ENCODE measurements at regions of chr10 and their contacts with region 1.

Region 1: GRCh38 chr10:96229568-96230030 is 41.8 kb downstream of the BLNK start:
- DNase-seq: peak; percentile 88
- ATAC-seq: peak; percentile 71
- H3K4me3 Mint-ChIP-seq: no peak overlapping the region
- H3K27ac Mint-ChIP-seq: no peak overlapping the region
- H3K4me1 Mint-ChIP-seq: peaks cover 12% of the 10 kb centered on the region
- H3K27me3 Mint-ChIP-seq: no peaks in the 10 kb centered on the region; the same call in 1 of the 2 replicates
- CTCF ChIP-seq: peak; percentile 77; the same call in 1 of the 2 replicates

Region 2: DNA sequence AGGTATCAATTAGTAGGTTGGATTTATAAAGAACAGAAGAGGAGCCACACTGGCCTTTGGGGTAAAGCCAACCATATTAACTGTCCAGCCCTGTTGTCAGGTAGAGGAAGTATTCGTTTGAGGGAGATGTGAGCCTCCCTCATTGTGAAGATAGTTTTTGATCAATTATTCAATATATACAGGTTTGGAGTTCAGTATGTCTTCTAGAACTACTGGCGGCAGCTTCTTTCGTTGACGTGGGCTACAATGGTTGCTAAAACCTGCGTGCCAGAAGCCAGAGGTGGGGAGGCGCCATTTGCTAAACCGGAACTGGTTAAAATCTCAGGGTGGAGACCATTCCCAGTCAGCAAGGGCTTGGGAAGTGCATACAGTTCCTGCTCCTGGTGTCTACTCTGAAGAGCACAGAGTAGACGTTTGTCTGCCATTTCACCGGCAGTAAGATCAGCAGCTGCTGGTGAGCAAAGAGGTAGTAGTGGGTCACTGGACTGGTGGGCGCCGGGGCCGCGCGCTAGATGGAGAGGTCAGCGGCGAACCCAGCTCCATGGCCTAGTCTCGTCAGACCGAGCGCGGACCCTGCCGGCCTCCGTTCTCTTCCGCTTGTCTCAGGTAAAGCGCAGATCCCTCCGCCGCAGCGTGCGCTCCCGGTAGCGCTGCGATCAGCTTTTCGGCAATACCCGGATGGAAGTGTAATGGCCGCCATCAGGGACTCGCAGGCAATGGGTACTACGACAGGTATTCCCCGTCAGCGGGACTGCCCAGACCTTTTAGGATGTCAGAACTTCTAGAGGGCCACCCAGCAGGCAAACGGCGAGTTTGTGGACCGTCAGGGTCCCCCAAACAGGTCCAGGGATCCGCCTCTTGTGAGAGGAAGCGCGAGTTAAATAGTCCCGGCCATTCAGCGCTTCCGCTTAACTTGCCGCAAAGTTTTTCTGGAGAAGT is 99.9 kb before region 1 on chr10 and contains the start of gene ZNF518A:
- CTCF ChIA-PET with region 1: interaction called, 14 read pairs
- POLR2A ChIA-PET with region 1: no interaction called
- DNase-seq: peak; percentile 91
- ATAC-seq: peak; percentile 88
- H3K4me3 Mint-ChIP-seq: peak within 1 kb of the TSS; percentile 87
- H3K27ac Mint-ChIP-seq: peak within 1 kb of the TSS; percentile 97
- H3K4me1 Mint-ChIP-seq: peaks cover 28% of the 10 kb centered on the region
- H3K27me3 Mint-ChIP-seq: peaks cover 3% of the 10 kb centered on the region; the same call in 1 of the 2 replicates
- CTCF ChIP-seq: no peak
- total RNA-seq, gene ZNF518A: 29.9 to 34.3 TPM (median 32.0 TPM) in 3 replicates

Region 3: GRCh38 chr10:96255549-96256331 is 26.1 kb after region 1 on chr10:
- CTCF ChIA-PET with region 1: interaction called, 12 read pairs
- POLR2A ChIA-PET with region 1: no interaction called
- DNase-seq: no peak
- ATAC-seq: peak; percentile 72
- H3K4me3 Mint-ChIP-seq: no peak overlapping the region; the same call in 1 of the 2 replicates
- H3K27ac Mint-ChIP-seq: 0 out of 2 replicates have a peak overlapping the region, but pooled peaks have one; percentile 36
- H3K4me1 Mint-ChIP-seq: peaks cover 20% of the 10 kb centered on the region
- H3K27me3 Mint-ChIP-seq: no peaks in the 10 kb centered on the region
- CTCF ChIP-seq: no peak

Region 4: GRCh38 chr10:96299383-96299782 is 69.8 kb after region 1 on chr10:
- CTCF ChIA-PET with region 1: interaction called, 110 read pairs
- POLR2A ChIA-PET with region 1: no interaction called
- DNase-seq: no peak
- ATAC-seq: no peak
- H3K4me3 Mint-ChIP-seq: no peak overlapping the region
- H3K27ac Mint-ChIP-seq: no peak overlapping the region
- H3K4me1 Mint-ChIP-seq: peaks cover 17% of the 10 kb centered on the region
- H3K27me3 Mint-ChIP-seq: peaks cover 2% of the 10 kb centered on the region; the same call in 1 of the 2 replicates
- CTCF ChIP-seq: no peak

Region 5: DNA sequence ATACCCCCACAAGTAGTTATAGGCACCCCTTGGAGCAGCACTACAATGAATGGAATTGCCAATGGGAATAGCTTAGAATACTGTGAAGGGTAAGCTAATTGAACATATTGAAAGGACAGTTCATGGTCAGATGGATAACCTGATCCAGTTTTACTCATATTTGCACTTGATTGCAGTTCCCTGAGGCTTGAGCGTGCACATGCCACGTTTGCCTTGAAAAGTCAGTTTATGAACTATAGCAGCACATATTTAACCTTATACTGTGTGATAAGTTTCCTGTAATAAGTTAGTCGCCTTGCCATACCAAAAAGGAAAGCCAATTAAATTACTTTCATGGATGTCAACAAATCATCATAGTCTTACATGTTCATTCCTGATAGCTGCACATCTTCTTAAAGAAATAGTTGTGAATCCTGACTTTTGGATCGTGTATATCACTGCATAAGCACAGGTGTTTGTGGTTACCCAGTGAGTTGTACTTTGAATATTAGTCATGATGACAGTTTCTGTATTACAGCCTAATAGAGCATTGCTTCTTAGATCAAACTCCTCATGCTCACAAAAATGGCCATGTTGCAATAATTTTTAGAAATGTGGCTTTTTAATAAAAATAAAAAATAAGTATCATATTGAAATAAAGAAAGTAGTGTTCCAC is 96.2 kb after region 1 on chr10:
- CTCF ChIA-PET with region 1: interaction called, 49 read pairs
- POLR2A ChIA-PET with region 1: no interaction called
- DNase-seq: no peak
- ATAC-seq: no peak
- H3K4me3 Mint-ChIP-seq: no peak overlapping the region
- H3K27ac Mint-ChIP-seq: no peak overlapping the region
- H3K4me1 Mint-ChIP-seq: peaks cover 6% of the 10 kb centered on the region; the same call in 1 of the 2 replicates
- H3K27me3 Mint-ChIP-seq: peaks cover 5% of the 10 kb centered on the region
- CTCF ChIP-seq: no peak